Caco-2 (cell line): ENCODE measurements at regions of chr12 and their contacts with region 1.

Region 1: GRCh38 chr12:109880016-109880931 is at the start of gene GLTP:
- DNase-seq: peak; percentile 83 to 94
- H3K4me3 ChIP-seq: peak within 1 kb of the TSS; percentile 89
- H3K4me3 Mint-ChIP-seq: peak within 1 kb of the TSS; percentile 71
- H3K27ac Mint-ChIP-seq: peak within 1 kb of the TSS; percentile 87
- H3K4me1 ChIP-seq: peaks cover 24% of the 10 kb centered on the region
- H3K4me1 Mint-ChIP-seq: peaks cover 30% of the 10 kb centered on the region
- H3K27me3 ChIP-seq: no peaks in the 10 kb centered on the region; the same call in 1 of the 2 replicates
- H3K27me3 Mint-ChIP-seq: no peaks in the 10 kb centered on the region
- CTCF ChIP-seq: peak; percentile 15 to 40
- total RNA-seq, gene GLTP: 12.2 and 14.9 TPM in 2 replicates

Region 2: DNA sequence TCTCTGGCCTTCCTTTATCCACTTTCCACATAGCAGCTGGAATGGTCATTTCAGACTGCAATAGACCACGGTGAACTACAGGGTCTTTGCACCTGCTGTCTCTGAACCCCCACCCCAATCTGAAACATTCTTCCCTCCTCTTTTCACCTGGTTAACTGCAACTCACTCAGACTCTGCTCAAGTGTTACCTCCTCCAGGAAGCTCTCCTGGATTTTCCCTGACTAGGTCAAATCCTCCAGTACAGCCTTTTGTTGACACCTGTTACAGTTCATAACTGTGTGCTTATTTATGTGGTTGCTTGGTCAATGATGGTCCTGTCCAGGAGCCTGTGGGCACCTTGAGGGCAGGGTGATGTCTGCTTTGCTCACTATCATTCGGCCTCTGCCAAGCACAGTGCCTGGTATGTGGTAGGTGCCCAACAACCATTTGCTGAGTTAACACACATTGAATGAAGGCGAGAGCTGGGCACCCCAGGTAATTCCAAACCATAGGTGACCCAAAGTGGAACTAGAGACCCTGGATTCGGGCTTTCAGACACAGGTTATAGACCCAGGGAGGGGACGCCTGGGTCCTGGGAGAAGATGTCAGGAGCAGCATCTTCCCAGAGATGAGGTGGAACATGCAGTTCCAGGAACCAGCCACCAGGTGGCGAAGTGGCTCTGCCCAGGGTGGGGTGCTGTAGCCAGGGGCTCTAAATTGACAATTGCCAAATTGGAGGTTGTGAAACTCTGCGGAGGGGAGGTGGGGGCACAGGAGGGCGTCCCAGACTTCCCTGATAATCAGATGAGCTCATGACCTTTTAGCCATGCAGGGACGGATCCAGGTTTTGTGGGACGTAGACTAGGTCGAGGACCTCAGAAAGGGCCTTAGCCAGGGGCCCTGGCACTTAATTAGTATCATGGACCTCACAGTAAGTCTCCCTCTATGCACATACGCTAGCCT is 75.2 kb before region 1 on chr12:
- CTCF ChIA-PET with region 1: interaction called, 3 read pairs
- POLR2A ChIA-PET with region 1: no interaction called
- intact Hi-C with region 1: loop called (anchors 1 kb)
- DNase-seq: peak; percentile 67 to 77
- H3K4me3 ChIP-seq: no peak overlapping the region
- H3K4me3 Mint-ChIP-seq: no peak overlapping the region
- H3K27ac Mint-ChIP-seq: no peak overlapping the region
- H3K4me1 ChIP-seq: no peaks in the 10 kb centered on the region
- H3K4me1 Mint-ChIP-seq: no peaks in the 10 kb centered on the region
- H3K27me3 ChIP-seq: no peaks in the 10 kb centered on the region
- H3K27me3 Mint-ChIP-seq: peaks cover 4% of the 10 kb centered on the region
- CTCF ChIP-seq: peak; percentile 94 to 98

Region 3: DNA sequence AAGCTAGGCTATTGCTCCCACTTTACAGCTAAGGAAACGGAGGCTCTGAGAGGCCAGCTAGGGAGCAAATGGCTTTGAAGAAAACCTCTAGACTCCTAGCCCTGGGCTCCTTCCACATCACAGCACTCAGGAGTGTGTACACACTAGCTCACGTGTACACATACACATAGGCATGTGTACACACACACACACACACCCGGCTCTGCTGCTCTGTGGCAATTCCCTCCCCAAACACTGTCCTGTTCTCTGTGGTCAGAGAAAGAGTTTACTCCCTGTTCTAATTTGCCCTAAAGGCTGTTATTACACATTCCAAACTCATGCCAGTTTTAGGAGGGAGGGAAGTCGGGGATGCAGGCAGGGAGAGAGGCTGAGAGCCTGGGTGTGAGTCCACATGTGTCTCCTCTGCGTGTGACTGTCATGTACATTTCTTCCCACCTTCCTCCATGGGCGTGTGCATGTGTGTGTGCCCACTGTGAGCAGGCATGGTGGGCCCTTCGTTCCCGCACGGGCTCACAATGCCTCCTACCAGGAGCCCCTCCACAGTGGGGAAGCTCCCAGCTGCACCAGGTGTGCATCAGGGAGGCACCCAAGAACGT is 61.3 kb before region 1 on chr12:
- CTCF ChIA-PET with region 1: no interaction called
- POLR2A ChIA-PET with region 1: no interaction called
- intact Hi-C with region 1: no loop called
- DNase-seq: no peak
- H3K4me3 ChIP-seq: no peak overlapping the region
- H3K4me3 Mint-ChIP-seq: no peak overlapping the region
- H3K27ac Mint-ChIP-seq: no peak overlapping the region
- H3K4me1 ChIP-seq: peaks cover 14% of the 10 kb centered on the region
- H3K4me1 Mint-ChIP-seq: no peaks in the 10 kb centered on the region
- H3K27me3 ChIP-seq: no peaks in the 10 kb centered on the region
- H3K27me3 Mint-ChIP-seq: no peaks in the 10 kb centered on the region
- CTCF ChIP-seq: no peak

Region 4: DNA sequence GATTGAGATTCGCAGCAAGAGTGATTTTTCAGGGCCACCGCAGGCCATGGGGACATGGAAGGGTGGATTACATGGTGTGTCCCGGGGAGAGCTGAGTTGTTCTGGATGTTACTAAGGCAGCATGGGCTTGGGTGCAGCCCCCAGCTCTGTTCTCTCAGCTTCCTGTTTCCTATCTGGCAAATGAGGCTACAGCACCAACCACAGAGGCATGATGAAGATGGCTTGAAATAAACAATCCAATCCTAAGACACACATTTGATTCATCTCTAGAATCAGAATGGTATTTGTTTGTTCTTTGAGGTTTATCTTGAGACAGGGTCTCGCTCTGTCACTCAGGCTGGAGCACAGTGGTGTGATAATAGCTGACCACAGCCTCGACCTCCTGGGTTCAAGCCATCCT is 21.5 kb before region 1 on chr12:
- CTCF ChIA-PET with region 1: no interaction called
- POLR2A ChIA-PET with region 1: interaction called, 11 read pairs
- intact Hi-C with region 1: loop called (anchors 1 kb)
- DNase-seq: no peak
- H3K4me3 ChIP-seq: no peak overlapping the region
- H3K4me3 Mint-ChIP-seq: no peak overlapping the region
- H3K27ac Mint-ChIP-seq: no peak overlapping the region
- H3K4me1 ChIP-seq: no peaks in the 10 kb centered on the region
- H3K4me1 Mint-ChIP-seq: no peaks in the 10 kb centered on the region
- H3K27me3 ChIP-seq: no peaks in the 10 kb centered on the region
- H3K27me3 Mint-ChIP-seq: no peaks in the 10 kb centered on the region
- CTCF ChIP-seq: no peak

Region 5: DNA sequence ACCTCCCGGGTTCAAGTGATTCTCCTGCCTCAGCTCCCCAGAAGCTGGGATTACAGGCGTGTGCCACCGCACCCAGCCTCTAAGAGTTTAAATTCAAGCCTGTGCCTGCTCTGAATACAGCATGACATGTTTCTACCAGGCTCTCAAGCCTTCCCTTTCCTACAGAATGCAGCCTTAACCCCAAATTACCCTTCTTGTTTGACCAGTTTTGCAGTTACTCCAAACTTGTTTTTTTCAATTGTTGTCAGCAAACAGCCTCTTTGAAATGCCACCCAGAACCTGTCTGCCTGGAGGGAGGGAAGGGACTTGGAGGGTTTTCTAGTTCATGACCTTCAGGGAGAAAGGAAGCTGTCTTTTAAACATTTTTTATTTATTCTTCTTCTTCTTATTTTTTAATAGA is 15.3 kb before region 1 on chr12:
- CTCF ChIA-PET with region 1: no interaction called
- POLR2A ChIA-PET with region 1: no interaction called
- intact Hi-C with region 1: loop called (anchors 1 kb)
- DNase-seq: peak in 1 of 2 experiments; percentile 40
- H3K4me3 ChIP-seq: no peak overlapping the region
- H3K4me3 Mint-ChIP-seq: no peak overlapping the region
- H3K27ac Mint-ChIP-seq: peak overlapping the region; percentile 57
- H3K4me1 ChIP-seq: peaks cover 15% of the 10 kb centered on the region
- H3K4me1 Mint-ChIP-seq: peaks cover 8% of the 10 kb centered on the region
- H3K27me3 ChIP-seq: no peaks in the 10 kb centered on the region
- H3K27me3 Mint-ChIP-seq: no peaks in the 10 kb centered on the region
- CTCF ChIP-seq: no peak

Region 6: DNA sequence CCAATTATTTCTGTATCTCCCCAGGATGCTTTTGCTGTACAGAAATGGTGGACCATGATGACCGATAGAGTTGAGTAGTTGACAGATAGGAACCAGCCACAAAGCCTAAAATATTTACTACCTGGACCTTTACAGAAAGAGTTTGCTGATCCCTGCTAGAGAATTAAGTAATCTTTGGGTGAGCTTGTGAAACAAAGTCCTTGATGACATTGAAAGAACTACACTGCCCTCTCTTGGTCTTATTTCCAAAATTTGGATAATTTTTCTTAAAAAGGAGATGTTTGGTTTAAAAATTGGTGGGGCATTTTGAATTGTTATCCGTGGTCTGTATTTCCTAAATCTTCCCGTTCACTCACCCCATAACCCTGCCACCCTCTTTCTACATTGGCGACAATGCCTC is 720.0 kb after region 1 on chr12:
- CTCF ChIA-PET with region 1: no interaction called
- POLR2A ChIA-PET with region 1: no interaction called
- intact Hi-C with region 1: no loop called
- DNase-seq: peak in 1 of 2 experiments; percentile 48
- H3K4me3 ChIP-seq: no peak overlapping the region
- H3K4me3 Mint-ChIP-seq: no peak overlapping the region
- H3K27ac Mint-ChIP-seq: no peak overlapping the region
- H3K4me1 ChIP-seq: no peaks in the 10 kb centered on the region
- H3K4me1 Mint-ChIP-seq: no peaks in the 10 kb centered on the region
- H3K27me3 ChIP-seq: no peaks in the 10 kb centered on the region
- H3K27me3 Mint-ChIP-seq: no peaks in the 10 kb centered on the region
- CTCF ChIP-seq: peak; percentile 10 to 68